Right cardiac atrium (tissue), 5 donors: ENCODE measurements at regions of chr12 and their contacts with region 1.

Region 1: DNA sequence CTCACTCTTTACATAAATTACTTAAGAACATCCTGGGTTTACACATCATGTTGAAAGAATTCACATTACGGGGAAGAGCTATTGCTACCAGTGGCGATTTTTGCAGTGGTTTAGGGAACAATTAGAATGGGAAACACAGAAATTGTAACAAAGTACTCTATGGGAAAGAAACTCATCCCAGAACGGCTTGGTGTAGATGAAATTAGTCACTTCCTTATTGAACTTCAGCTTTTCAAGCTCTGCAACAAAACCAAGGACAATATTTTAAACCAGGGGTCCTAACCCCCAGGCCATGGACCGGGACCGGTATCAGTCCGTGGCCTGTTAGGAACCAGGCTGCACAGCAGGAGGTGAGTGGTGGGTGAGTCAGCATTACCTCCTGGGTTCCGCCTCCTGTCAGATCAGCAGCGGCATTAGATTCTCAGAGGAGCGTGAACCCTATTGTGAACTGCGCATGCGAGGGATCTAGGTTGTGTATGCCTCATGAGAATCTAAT is 32.3 kb upstream of the FICD start:
- DNase-seq: no peak
- ATAC-seq: no peak
- H3K4me3 ChIP-seq: no peak overlapping the region
- H3K27ac ChIP-seq: no peak overlapping the region
- H3K4me1 ChIP-seq: no peaks in the 10 kb centered on the region
- H3K27me3 ChIP-seq: no peaks in the 10 kb centered on the region

Region 2: GRCh38 chr12:108004319-108004718 is 478.4 kb before region 1 on chr12:
- intact Hi-C with region 1: loop called in 1 of 4 experiments (anchors 10 kb)
- DNase-seq: no peak
- ATAC-seq: no peak
- H3K4me3 ChIP-seq: no peak overlapping the region
- H3K27ac ChIP-seq: no peak overlapping the region
- H3K4me1 ChIP-seq: no peaks in the 10 kb centered on the region
- H3K27me3 ChIP-seq: no peaks in the 10 kb centered on the region